ENCODE measurements at regions of chr13 and their contacts with region 1.

Region 1: GRCh38 chr13:48580185-48580803 is 47.4 kb upstream of the RCBTB2 start:
- DNase-seq: peak in 2 of 3 donors; percentile 63 to 84
- H3K4me3 ChIP-seq: no peak overlapping the region
- H3K4me3 Mint-ChIP-seq: no peak overlapping the region
- H3K27ac ChIP-seq: peak overlapping the region in 1 of 2 donors; percentile 96
- H3K27ac Mint-ChIP-seq: peak overlapping the region in 6 of 7 donors; percentile 20 to 87 (median 51)
- H3K4me1 ChIP-seq: peaks cover 62 to 63% of the 10 kb centered on the region in 2 donors
- H3K4me1 Mint-ChIP-seq: peaks cover 57% of the 10 kb centered on the region
- H3K27me3 ChIP-seq: no peaks in the 10 kb centered on the region
- H3K27me3 Mint-ChIP-seq: peaks cover 0 to 3% (median 0%) of the 10 kb centered on the region in 3 donors
- CTCF ChIP-seq: peak; percentile 84

Region 2: DNA sequence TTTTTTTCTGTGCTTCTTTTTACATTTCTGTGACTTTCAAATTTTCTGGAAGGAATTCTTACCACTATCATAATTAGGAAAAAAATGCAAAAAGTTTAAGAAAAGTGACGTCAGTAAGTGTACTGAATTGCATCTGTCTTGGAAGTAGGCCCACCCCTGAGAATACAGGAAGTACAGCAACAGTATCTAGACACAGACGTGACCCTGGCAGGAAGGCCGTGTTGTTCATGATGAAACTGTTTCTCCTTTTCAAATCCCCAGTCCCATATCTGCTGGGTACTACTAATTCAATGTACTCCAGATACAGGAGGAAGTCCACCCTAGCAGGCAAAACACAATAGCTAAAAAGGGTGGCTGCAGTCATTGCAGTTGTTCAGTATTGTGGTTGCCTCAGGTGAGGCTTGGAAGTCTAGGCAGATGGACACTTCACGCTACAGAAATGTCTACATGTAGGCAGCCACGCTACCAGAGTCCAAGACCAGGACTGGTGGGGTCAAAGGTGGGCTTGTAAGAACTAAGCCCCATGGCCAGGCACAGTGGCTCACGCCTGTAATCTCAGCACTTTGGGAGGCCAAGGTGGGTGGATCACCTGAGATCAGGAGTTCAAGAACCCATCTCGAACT is 435.8 kb before region 1 on chr13:
- intact Hi-C with region 1: loop called in 1 of 2 experiments (anchors 10 kb)
- DNase-seq: peak; percentile 91 to 95 (median 93)
- H3K4me3 ChIP-seq: peak overlapping the region in 1 of 3 experiments; percentile 36
- H3K4me3 Mint-ChIP-seq: peak overlapping the region in 1 of 2 donors; percentile 26
- H3K27ac ChIP-seq: peak overlapping the region; percentile 85 to 89
- H3K27ac Mint-ChIP-seq: peak overlapping the region; percentile 86 to 95 (median 94)
- H3K4me1 ChIP-seq: peaks cover 44 to 47% of the 10 kb centered on the region in 2 donors
- H3K4me1 Mint-ChIP-seq: peaks cover 47% of the 10 kb centered on the region
- H3K27me3 ChIP-seq: no peaks in the 10 kb centered on the region
- H3K27me3 Mint-ChIP-seq: peaks cover 0 to 2% (median 0%) of the 10 kb centered on the region in 3 donors
- CTCF ChIP-seq: no peak

Region 3: GRCh38 chr13:48334534-48335127 is 245.7 kb before region 1 on chr13:
- intact Hi-C with region 1: loop called (anchors 2 to 5 kb)
- DNase-seq: peak in 2 of 3 donors; percentile 42 to 62
- H3K4me3 ChIP-seq: no peak overlapping the region
- H3K4me3 Mint-ChIP-seq: no peak overlapping the region
- H3K27ac ChIP-seq: no peak overlapping the region
- H3K27ac Mint-ChIP-seq: no peak overlapping the region
- H3K4me1 ChIP-seq: no peaks in the 10 kb centered on the region
- H3K4me1 Mint-ChIP-seq: peaks cover 9% of the 10 kb centered on the region
- H3K27me3 ChIP-seq: no peaks in the 10 kb centered on the region
- H3K27me3 Mint-ChIP-seq: peaks cover 0 to 3% (median 0%) of the 10 kb centered on the region in 3 donors
- CTCF ChIP-seq: peak; percentile 84

Region 4: GRCh38 chr13:48400850-48401291 is 179.4 kb before region 1 on chr13:
- intact Hi-C with region 1: loop called (anchors 5 to 10 kb)
- DNase-seq: peak; percentile 15 to 53 (median 43)
- H3K4me3 ChIP-seq: no peak overlapping the region
- H3K4me3 Mint-ChIP-seq: peak overlapping the region in 1 of 2 donors; percentile 13
- H3K27ac ChIP-seq: peak overlapping the region in 1 of 2 donors; percentile 69
- H3K27ac Mint-ChIP-seq: peak overlapping the region in 6 of 7 donors; percentile 55 to 93 (median 85)
- H3K4me1 ChIP-seq: peaks cover 33 to 50% of the 10 kb centered on the region in 2 donors
- H3K4me1 Mint-ChIP-seq: peaks cover 43% of the 10 kb centered on the region
- H3K27me3 ChIP-seq: no peaks in the 10 kb centered on the region
- H3K27me3 Mint-ChIP-seq: no peaks in the 10 kb centered on the region
- CTCF ChIP-seq: peak; percentile 22

Region 5: GRCh38 chr13:48492470-48493065 is 87.7 kb before region 1 on chr13:
- intact Hi-C with region 1: loop called in 1 of 2 experiments (anchors 5 kb)
- DNase-seq: peak; percentile 84 to 91 (median 90)
- H3K4me3 ChIP-seq: peak overlapping the region; percentile 34 to 69 (median 36)
- H3K4me3 Mint-ChIP-seq: no peak overlapping the region
- H3K27ac ChIP-seq: peak overlapping the region; percentile 91 to 92
- H3K27ac Mint-ChIP-seq: no peak overlapping the region
- H3K4me1 ChIP-seq: peaks cover 62 to 77% of the 10 kb centered on the region in 2 donors
- H3K4me1 Mint-ChIP-seq: peaks cover 45% of the 10 kb centered on the region
- H3K27me3 ChIP-seq: no peaks in the 10 kb centered on the region
- H3K27me3 Mint-ChIP-seq: no peaks in the 10 kb centered on the region
- CTCF ChIP-seq: no peak

Region 6: GRCh38 chr13:48532506-48533499 is 47.5 kb before region 1 on chr13 and contains the start of gene RCBTB2:
- intact Hi-C with region 1: loop called in 1 of 2 experiments (anchors 5 kb)
- DNase-seq: peak; percentile 98 to 99 (median 99)
- H3K4me3 ChIP-seq: peak within 1 kb of the TSS; percentile 77 to 88 (median 83)
- H3K4me3 Mint-ChIP-seq: peak within 1 kb of the TSS; percentile 91 to 94
- H3K27ac ChIP-seq: peak within 1 kb of the TSS; percentile 97
- H3K27ac Mint-ChIP-seq: peak within 1 kb of the TSS; percentile 95 to 99 (median 97)
- H3K4me1 ChIP-seq: peaks cover 67 to 86% of the 10 kb centered on the region in 2 donors
- H3K4me1 Mint-ChIP-seq: peaks cover 71% of the 10 kb centered on the region
- H3K27me3 ChIP-seq: no peaks in the 10 kb centered on the region
- H3K27me3 Mint-ChIP-seq: no peaks in the 10 kb centered on the region
- CTCF ChIP-seq: no peak
- polyA plus RNA-seq, gene RCBTB2: 55.5 to 100 (median 64.4) TPM

Measured in CD14-positive monocyte (primary cell).